ENCODE measurements at regions of chr6 and their contacts with region 1.

Region 1: DNA sequence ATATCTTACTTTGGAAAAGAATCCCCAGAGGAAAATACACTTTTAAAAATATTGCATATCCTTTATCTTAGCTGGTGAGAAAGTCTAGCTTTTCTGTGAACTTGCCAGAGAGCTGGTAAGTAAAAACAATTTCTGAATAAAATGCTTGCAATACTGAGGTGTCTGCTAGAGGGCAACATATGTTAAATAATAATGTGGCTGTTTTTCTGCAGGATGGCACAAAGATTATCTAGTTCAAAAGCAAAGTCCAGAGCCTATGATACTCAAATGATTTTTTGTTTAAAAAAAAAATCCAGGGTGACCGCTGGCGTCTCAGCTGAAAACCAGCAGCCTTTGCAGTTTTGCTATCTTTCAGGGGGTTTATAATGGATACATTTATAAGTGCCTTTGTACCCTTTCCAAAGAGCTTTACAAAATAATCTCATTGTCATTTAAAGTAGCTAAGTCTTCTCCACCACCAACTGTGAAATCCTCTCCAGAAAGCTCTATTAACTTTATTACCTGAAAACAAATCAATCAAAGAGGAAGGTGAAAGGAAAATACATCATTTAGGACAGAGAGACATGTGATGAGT is 194.9 kb downstream of the PHACTR1 start:
- DNase-seq: no peak
- ATAC-seq: peak in 2 of 4 donors; percentile 27 to 34
- H3K4me3 ChIP-seq: no peak overlapping the region
- H3K27ac ChIP-seq: no peak overlapping the region
- H3K4me1 ChIP-seq: peaks cover 0 to 15% (median 0%) of the 10 kb centered on the region in 12 donors
- H3K27me3 ChIP-seq: no peaks in the 10 kb centered on the region
- CTCF ChIP-seq: peak; percentile 30 to 72 (median 58)
- POLR2A ChIP-seq: no peak

Region 2: DNA sequence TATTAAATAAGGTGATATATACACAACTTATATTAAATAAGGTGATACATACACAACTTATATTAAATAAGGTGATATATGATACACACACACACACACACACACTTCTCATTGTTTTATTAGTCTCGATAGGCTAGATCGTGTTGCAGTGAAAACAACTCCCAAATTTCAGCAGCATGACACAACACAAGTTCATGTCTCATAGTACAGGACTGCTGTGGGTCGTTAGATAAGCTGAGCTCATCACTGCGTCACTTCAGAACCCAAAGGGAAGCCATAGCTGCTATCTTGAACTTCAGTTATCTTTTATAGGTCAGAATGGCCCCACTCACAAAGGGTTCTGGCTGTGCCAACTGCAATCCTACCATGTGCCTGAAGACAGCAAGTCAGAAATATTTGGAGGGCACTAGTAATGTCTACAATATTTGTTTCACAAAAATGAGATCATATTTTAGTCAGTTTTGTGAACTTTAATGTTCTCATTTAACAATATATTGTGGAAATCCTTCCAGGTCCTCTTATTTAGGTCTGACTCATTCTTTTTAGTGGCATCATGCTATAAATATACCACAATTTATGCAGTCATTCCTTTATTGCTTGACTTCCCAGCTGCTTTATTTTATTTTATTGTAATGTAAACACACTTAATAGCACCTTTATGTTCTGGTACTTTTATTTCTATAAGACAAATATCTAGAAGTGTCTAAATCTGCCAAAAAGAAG is 95.3 kb after region 1 on chr6:
- intact Hi-C with region 1: loop called in 5 of 10 experiments (anchors 5 to 10 kb)
- DNase-seq: peak in 2 of 5 donors; percentile 33 to 71
- ATAC-seq: peak; percentile 87 to 96 (median 92)
- H3K4me3 ChIP-seq: no peak overlapping the region
- H3K27ac ChIP-seq: peak overlapping the region in 11 of 12 donors; percentile 33 to 75 (median 64)
- H3K4me1 ChIP-seq: peaks cover 0 to 39% (median 12%) of the 10 kb centered on the region in 12 donors
- H3K27me3 ChIP-seq: no peaks in the 10 kb centered on the region
- CTCF ChIP-seq: no peak
- POLR2A ChIP-seq: no peak

Region 3: DNA sequence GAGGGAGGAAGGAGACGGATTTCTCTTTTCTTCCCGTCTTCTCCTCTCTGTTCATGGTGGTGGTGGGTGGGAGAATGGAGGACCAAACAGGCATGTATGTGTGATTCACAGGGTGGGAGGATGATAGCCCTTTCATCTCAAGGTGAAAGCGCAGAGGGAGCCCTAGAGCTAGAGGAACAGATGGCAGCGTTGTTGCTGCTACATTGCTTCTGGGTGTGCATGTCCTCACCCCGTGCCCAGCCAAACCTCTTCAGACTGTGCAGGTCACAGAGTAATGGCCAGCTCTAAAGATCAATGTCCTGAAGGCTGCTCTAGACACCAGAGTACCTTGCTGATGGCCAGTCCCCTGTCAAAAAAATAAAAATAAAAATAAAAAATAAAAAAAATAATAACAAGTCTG is 115.1 kb after region 1 on chr6:
- intact Hi-C with region 1: loop called in 1 of 10 experiments (anchors 10 kb)
- DNase-seq: peak in 3 of 5 donors; percentile 23 to 56 (median 45)
- ATAC-seq: peak; percentile 78 to 86 (median 84)
- H3K4me3 ChIP-seq: no peak overlapping the region
- H3K27ac ChIP-seq: peak overlapping the region in 9 of 12 donors; percentile 20 to 61 (median 31)
- H3K4me1 ChIP-seq: peaks cover 0 to 46% (median 19%) of the 10 kb centered on the region in 12 donors
- H3K27me3 ChIP-seq: no peaks in the 10 kb centered on the region
- CTCF ChIP-seq: peak in 2 of 12 donors; percentile 6 to 7
- POLR2A ChIP-seq: no peak

Region 4: GRCh38 chr6:13120483-13121482 is 209.3 kb after region 1 on chr6:
- intact Hi-C with region 1: loop called in 8 of 10 experiments (anchors 1 to 10 kb)
- DNase-seq: peak in 4 of 5 donors; percentile 41 to 76 (median 59)
- ATAC-seq: peak; percentile 84 to 96 (median 95)
- H3K4me3 ChIP-seq: no peak overlapping the region
- H3K27ac ChIP-seq: peak overlapping the region in 6 of 12 donors; percentile 2 to 64 (median 20)
- H3K4me1 ChIP-seq: peaks cover 0 to 27% (median 9%) of the 10 kb centered on the region in 12 donors
- H3K27me3 ChIP-seq: no peaks in the 10 kb centered on the region
- CTCF ChIP-seq: peak in 7 of 12 donors; percentile 12 to 46 (median 25)
- POLR2A ChIP-seq: no peak

Region 5: GRCh38 chr6:13302751-13303667 is 391.5 kb after region 1 on chr6:
- intact Hi-C with region 1: loop called in 2 of 10 experiments (anchors 10 kb)
- DNase-seq: peak in 4 of 5 donors; percentile 48 to 73 (median 60)
- ATAC-seq: peak; percentile 35 to 85 (median 78)
- H3K4me3 ChIP-seq: peak overlapping the region in 7 of 12 donors; percentile 4 to 39 (median 15)
- H3K27ac ChIP-seq: peak overlapping the region; percentile 17 to 88 (median 70)
- H3K4me1 ChIP-seq: peaks cover 0 to 36% (median 28%) of the 10 kb centered on the region in 12 donors
- H3K27me3 ChIP-seq: no peaks in the 10 kb centered on the region
- CTCF ChIP-seq: no peak
- POLR2A ChIP-seq: no peak

Region 6: GRCh38 chr6:13526727-13527670 is 615.5 kb after region 1 on chr6:
- intact Hi-C with region 1: loop called in 1 of 10 experiments (anchors 5 kb)
- DNase-seq: peak in 3 of 5 donors; percentile 52 to 60 (median 53)
- ATAC-seq: peak; percentile 44 to 82 (median 66)
- H3K4me3 ChIP-seq: no peak overlapping the region
- H3K27ac ChIP-seq: peak overlapping the region; percentile 26 to 88 (median 76)
- H3K4me1 ChIP-seq: peaks cover 3 to 57% (median 34%) of the 10 kb centered on the region in 12 donors
- H3K27me3 ChIP-seq: no peaks in the 10 kb centered on the region
- CTCF ChIP-seq: peak in 1 of 12 donors; percentile 7
- POLR2A ChIP-seq: no peak